CD8-positive, alpha-beta memory T cell (primary cell): ENCODE measurements at regions of chr1 and their contacts with region 1.

Region 1: GRCh38 chr1:160837558-160838205 is 25.0 kb downstream of the CD244 start:
- DNase-seq: peak; percentile 74 to 93 (median 89)
- H3K4me3 ChIP-seq: peak overlapping the region; percentile 38
- H3K4me3 Mint-ChIP-seq: peak overlapping the region; percentile 63 to 90 (median 83)
- H3K27ac ChIP-seq: peak overlapping the region; percentile 41
- H3K27ac Mint-ChIP-seq: peak overlapping the region; percentile 88 to 98 (median 96)
- H3K4me1 ChIP-seq: peaks cover 71% of the 10 kb centered on the region
- H3K4me1 Mint-ChIP-seq: peaks cover 77 to 91% (median 90%) of the 10 kb centered on the region in 3 donors
- H3K27me3 ChIP-seq: no peaks in the 10 kb centered on the region
- H3K27me3 Mint-ChIP-seq: no peaks in the 10 kb centered on the region

Region 2: GRCh38 chr1:160675641-160676410 is 161.9 kb before region 1 on chr1:
- CTCF ChIA-PET with region 1: interaction called, 11 read pairs
- POLR2A ChIA-PET with region 1: no interaction called
- DNase-seq: peak; percentile 58 to 84 (median 60)
- H3K4me3 ChIP-seq: no peak overlapping the region
- H3K4me3 Mint-ChIP-seq: peak overlapping the region in 2 of 7 donors; percentile 24 to 63
- H3K27ac ChIP-seq: no peak overlapping the region
- H3K27ac Mint-ChIP-seq: peak overlapping the region in 7 of 8 donors; percentile 58 to 87 (median 82)
- H3K4me1 ChIP-seq: peaks cover 42% of the 10 kb centered on the region
- H3K4me1 Mint-ChIP-seq: peaks cover 19 to 35% (median 23%) of the 10 kb centered on the region in 3 donors
- H3K27me3 ChIP-seq: no peaks in the 10 kb centered on the region
- H3K27me3 Mint-ChIP-seq: no peaks in the 10 kb centered on the region

Region 3: DNA sequence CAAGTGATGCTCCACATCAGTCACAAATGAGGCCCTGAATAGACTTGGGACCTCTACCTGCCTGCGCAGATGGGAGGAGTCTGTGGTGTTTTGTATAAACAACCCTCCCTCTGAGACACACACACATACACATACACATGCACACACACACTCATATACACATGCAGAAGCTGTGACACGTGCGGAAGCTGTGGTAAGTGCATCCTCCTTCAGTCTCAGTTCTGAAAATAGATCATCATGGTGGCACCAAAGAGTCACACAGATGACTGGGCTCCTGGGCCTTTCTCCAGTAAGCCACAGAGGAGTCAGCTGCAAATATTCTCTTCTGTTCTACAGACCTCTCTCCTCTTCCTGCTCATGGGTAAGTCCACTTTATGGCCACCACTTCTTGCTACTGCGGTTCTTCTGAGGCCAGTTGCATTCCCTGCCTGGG is 41.7 kb before region 1 on chr1 and contains the start of gene LY9:
- CTCF ChIA-PET with region 1: interaction called, 21 read pairs
- POLR2A ChIA-PET with region 1: interaction called, 4 read pairs
- DNase-seq: peak; percentile 65 to 93 (median 92)
- H3K4me3 ChIP-seq: peak within 1 kb of the TSS; percentile 80
- H3K4me3 Mint-ChIP-seq: peak within 1 kb of the TSS; percentile 96 to 99 (median 97)
- H3K27ac ChIP-seq: peak within 1 kb of the TSS; percentile 69
- H3K27ac Mint-ChIP-seq: peak within 1 kb of the TSS; percentile 92 to 98 (median 97)
- H3K4me1 ChIP-seq: peaks cover 34% of the 10 kb centered on the region
- H3K4me1 Mint-ChIP-seq: peaks cover 55 to 62% (median 57%) of the 10 kb centered on the region in 3 donors
- H3K27me3 ChIP-seq: no peaks in the 10 kb centered on the region
- H3K27me3 Mint-ChIP-seq: no peaks in the 10 kb centered on the region
- total RNA-seq, gene LY9: 16.4 to 16.5 TPM

Region 4: GRCh38 chr1:160862203-160863060 is 24.8 kb after region 1 on chr1 and contains the start of gene CD244:
- CTCF ChIA-PET with region 1: interaction called, 137 read pairs
- POLR2A ChIA-PET with region 1: interaction called, 3 read pairs
- DNase-seq: peak in 4 of 5 donors; percentile 46 to 83 (median 59)
- H3K4me3 ChIP-seq: peak within 1 kb of the TSS; percentile 27
- H3K4me3 Mint-ChIP-seq: peak within 1 kb of the TSS; percentile 87 to 98 (median 91)
- H3K27ac ChIP-seq: no peak within 1 kb of the TSS
- H3K27ac Mint-ChIP-seq: peak within 1 kb of the TSS; percentile 77 to 98 (median 94)
- H3K4me1 ChIP-seq: peaks cover 13% of the 10 kb centered on the region
- H3K4me1 Mint-ChIP-seq: peaks cover 50 to 58% (median 56%) of the 10 kb centered on the region in 3 donors
- H3K27me3 ChIP-seq: no peaks in the 10 kb centered on the region
- H3K27me3 Mint-ChIP-seq: peaks cover 0 to 1% of the 10 kb centered on the region in 2 donors
- total RNA-seq, gene CD244: 1.8 to 1.9 TPM

Region 5: GRCh38 chr1:160925652-160926241 is 88.1 kb after region 1 on chr1:
- CTCF ChIA-PET with region 1: no interaction called
- POLR2A ChIA-PET with region 1: no interaction called
- DNase-seq: no peak
- H3K4me3 ChIP-seq: no peak overlapping the region
- H3K4me3 Mint-ChIP-seq: no peak overlapping the region
- H3K27ac ChIP-seq: no peak overlapping the region
- H3K27ac Mint-ChIP-seq: no peak overlapping the region
- H3K4me1 ChIP-seq: no peaks in the 10 kb centered on the region
- H3K4me1 Mint-ChIP-seq: peaks cover 0 to 4% (median 0%) of the 10 kb centered on the region in 3 donors
- H3K27me3 ChIP-seq: no peaks in the 10 kb centered on the region
- H3K27me3 Mint-ChIP-seq: peaks cover 3 to 4% of the 10 kb centered on the region in 2 donors

Region 6: DNA sequence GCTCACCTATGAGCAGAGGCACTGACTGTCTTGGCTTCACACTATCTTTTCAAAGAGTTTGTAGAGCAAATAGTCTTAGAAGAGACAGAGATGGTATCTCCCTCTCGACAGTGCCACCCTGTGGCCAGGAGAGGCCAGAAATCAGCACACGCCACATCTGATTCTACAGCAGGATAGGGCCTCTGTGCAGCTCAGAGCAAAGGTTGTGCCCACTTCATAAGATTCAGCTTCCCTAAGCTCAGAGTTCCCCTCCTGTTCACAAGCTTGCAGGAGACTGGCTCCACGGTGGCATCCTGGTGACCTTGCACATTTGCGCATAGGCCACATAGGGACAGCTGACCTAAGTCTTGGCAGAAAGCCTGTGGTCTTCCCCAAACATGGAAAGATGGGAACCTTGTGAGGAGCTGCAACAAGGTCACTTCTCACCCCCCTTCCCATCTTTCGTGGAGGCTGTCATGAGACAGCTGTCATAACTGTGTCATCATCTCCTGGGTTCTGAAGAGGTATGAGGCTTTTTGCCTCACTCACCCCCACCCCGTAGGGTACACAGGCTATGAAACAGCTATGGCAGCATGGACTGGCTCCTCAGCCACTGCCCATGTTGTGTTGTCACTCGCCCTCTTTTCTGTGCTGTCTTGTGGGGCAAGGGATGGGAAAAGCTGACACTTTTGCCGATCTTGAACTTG is 113.9 kb after region 1 on chr1:
- CTCF ChIA-PET with region 1: interaction called, 135 read pairs
- POLR2A ChIA-PET with region 1: interaction called, 4 read pairs
- DNase-seq: peak; percentile 49 to 74 (median 55)
- H3K4me3 ChIP-seq: no peak overlapping the region
- H3K4me3 Mint-ChIP-seq: no peak overlapping the region
- H3K27ac ChIP-seq: no peak overlapping the region
- H3K27ac Mint-ChIP-seq: peak overlapping the region in 3 of 8 donors; percentile 12 to 36 (median 33)
- H3K4me1 ChIP-seq: peaks cover 3% of the 10 kb centered on the region
- H3K4me1 Mint-ChIP-seq: peaks cover 12 to 26% (median 23%) of the 10 kb centered on the region in 3 donors
- H3K27me3 ChIP-seq: no peaks in the 10 kb centered on the region
- H3K27me3 Mint-ChIP-seq: no peaks in the 10 kb centered on the region